Mammary epithelial cell (primary cell): ENCODE measurements at regions of chr17 and their contacts with region 1.

Region 1: GRCh38 chr17:76501018-76501826 is at the start of gene RHBDF2:
- DNase-seq: peak; percentile 85
- H3K4me3 ChIP-seq: peak within 1 kb of the TSS; percentile 86 to 94 (median 90)
- H3K27ac ChIP-seq: peak within 1 kb of the TSS; percentile 70
- H3K4me1 ChIP-seq: peaks cover 34% of the 10 kb centered on the region
- H3K27me3 ChIP-seq: no peaks in the 10 kb centered on the region
- CTCF ChIP-seq: no peak
- total RNA-seq, gene RHBDF2: 22.0 to 51.3 TPM

Region 2: DNA sequence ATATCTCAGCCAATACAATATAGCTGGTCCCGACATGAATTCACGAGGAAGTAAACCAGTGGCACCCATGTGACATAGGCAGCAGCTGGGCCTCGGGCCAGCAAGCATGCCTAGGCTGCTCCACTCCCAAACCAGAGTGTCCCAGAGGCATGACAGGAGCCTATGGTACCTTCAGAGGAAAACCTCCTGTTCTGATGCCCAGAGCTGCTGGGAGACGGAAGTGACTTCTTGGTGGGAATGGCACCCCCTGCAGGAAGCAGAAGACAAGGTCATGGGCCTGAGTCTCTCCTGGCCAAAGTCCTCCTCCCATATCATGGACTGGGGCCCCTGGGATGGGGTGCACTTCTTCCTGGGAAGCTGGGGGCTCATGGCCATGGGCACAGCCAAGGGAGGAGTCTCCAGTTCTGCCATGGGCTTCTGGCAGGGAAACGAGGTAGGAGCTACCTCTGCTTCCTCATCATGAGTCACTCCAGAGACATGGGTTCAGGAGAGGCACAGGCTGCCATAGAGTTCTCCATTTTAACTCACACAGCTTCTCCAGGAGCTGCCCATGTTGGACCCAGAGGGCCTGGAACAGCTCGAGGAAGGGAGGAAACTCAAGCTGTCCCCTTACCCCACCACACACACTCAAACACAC is 573.8 kb before region 1 on chr17:
- CTCF ChIA-PET with region 1: no interaction called
- dilution Hi-C with region 1: no loop called
- in situ Hi-C with region 1: no loop called
- intact Hi-C with region 1: no loop called
- DNase-seq: peak; percentile 9
- H3K4me3 ChIP-seq: no peak overlapping the region
- H3K27ac ChIP-seq: no peak overlapping the region
- H3K4me1 ChIP-seq: peaks cover 9% of the 10 kb centered on the region
- H3K27me3 ChIP-seq: no peaks in the 10 kb centered on the region
- CTCF ChIP-seq: peak in 1 of 2 donors; percentile 47

Region 3: GRCh38 chr17:76307299-76307965 is 193.8 kb before region 1 on chr17:
- CTCF ChIA-PET with region 1: interaction called, 3 read pairs
- dilution Hi-C with region 1: no loop called
- in situ Hi-C with region 1: loop called in 1 of 2 experiments (anchors 10 kb)
- intact Hi-C with region 1: loop called (anchors 5 kb)
- DNase-seq: no peak
- H3K4me3 ChIP-seq: no peak overlapping the region
- H3K27ac ChIP-seq: no peak overlapping the region
- H3K4me1 ChIP-seq: no peaks in the 10 kb centered on the region
- H3K27me3 ChIP-seq: no peaks in the 10 kb centered on the region
- CTCF ChIP-seq: no peak

Region 4: GRCh38 chr17:76327696-76328095 is 173.5 kb before region 1 on chr17:
- CTCF ChIA-PET with region 1: no interaction called
- dilution Hi-C with region 1: no loop called
- in situ Hi-C with region 1: no loop called
- intact Hi-C with region 1: no loop called
- DNase-seq: no peak
- H3K4me3 ChIP-seq: no peak overlapping the region
- H3K27ac ChIP-seq: no peak overlapping the region
- H3K4me1 ChIP-seq: no peaks in the 10 kb centered on the region
- H3K27me3 ChIP-seq: no peaks in the 10 kb centered on the region
- CTCF ChIP-seq: no peak

Region 5: GRCh38 chr17:76408052-76408849 is 93.0 kb before region 1 on chr17:
- CTCF ChIA-PET with region 1: interaction called, 4 read pairs
- dilution Hi-C with region 1: no loop called
- in situ Hi-C with region 1: loop called (anchors 5 to 10 kb)
- intact Hi-C with region 1: loop called (anchors 1 kb)
- DNase-seq: peak; percentile 52
- H3K4me3 ChIP-seq: no peak overlapping the region
- H3K27ac ChIP-seq: no peak overlapping the region
- H3K4me1 ChIP-seq: no peaks in the 10 kb centered on the region
- H3K27me3 ChIP-seq: no peaks in the 10 kb centered on the region
- CTCF ChIP-seq: peak; percentile 96 to 98

Region 6: DNA sequence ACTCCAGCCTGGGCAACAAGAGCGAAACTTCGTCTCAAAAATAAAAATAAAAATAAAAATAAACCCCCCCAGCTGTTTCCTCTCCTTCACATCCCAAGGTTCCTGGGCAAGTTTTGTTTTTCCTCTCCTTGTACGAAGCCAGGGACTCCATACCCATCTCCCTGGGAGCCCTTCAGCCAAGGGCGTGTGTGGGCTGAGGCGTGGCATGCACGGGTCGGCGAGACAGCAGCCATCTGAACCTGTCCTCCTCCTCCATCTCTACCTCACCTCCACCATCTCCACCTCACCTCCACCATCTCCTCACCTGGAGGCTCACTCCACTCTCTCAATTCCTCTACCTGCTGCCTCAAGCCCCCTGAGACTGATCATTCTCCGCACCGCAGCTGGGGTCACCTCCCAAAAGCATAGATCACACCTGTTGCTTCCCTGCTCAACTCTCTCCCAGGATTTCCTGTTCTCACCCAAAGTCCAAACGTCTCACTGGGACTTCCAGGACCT is 16.9 kb before region 1 on chr17:
- CTCF ChIA-PET with region 1: no interaction called
- dilution Hi-C with region 1: no loop called
- in situ Hi-C with region 1: no loop called
- intact Hi-C with region 1: loop called (anchors 1 kb)
- DNase-seq: peak; percentile 15
- H3K4me3 ChIP-seq: no peak overlapping the region
- H3K27ac ChIP-seq: no peak overlapping the region
- H3K4me1 ChIP-seq: peaks cover 6% of the 10 kb centered on the region
- H3K27me3 ChIP-seq: no peaks in the 10 kb centered on the region
- CTCF ChIP-seq: no peak

Region 7: GRCh38 chr17:76527430-76528111 is 26.3 kb after region 1 on chr17:
- CTCF ChIA-PET with region 1: no interaction called
- dilution Hi-C with region 1: no loop called
- in situ Hi-C with region 1: no loop called
- intact Hi-C with region 1: no loop called
- DNase-seq: peak; percentile 62
- H3K4me3 ChIP-seq: peak overlapping the region in 1 of 3 experiments; percentile 16
- H3K27ac ChIP-seq: peak overlapping the region; percentile 49
- H3K4me1 ChIP-seq: peaks cover 63% of the 10 kb centered on the region
- H3K27me3 ChIP-seq: peaks cover 2% of the 10 kb centered on the region
- CTCF ChIP-seq: no peak